Adrenal gland (tissue), 19 donors: ENCODE measurements at regions of chr6 and their contacts with region 1.

Region 1: DNA sequence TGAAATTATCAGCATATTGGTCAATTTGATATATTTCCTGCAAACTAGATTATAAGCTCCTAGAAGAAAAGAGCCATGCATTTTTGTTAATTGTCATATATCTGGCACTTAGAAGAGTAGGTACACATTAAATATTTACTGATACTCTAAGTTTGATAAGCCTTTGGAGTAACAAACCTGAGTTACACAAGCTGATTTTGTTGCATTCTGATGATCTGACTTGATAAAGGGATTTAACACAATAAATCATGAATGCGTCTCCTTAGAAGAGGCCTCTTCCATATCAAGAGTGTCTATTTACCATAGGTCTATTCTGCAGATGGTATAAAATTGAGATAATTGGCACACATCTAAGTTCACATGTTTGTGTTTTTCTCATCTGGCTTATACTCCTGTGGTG is 48.6 kb upstream of the SERINC1 start:
- DNase-seq: no peak
- H3K4me3 ChIP-seq: no peak overlapping the region
- H3K27ac ChIP-seq: no peak overlapping the region
- H3K4me1 ChIP-seq: no peaks in the 10 kb centered on the region
- H3K27me3 ChIP-seq: no peaks in the 10 kb centered on the region
- CTCF ChIP-seq: no peak
- POLR2A ChIP-seq: no peak

Region 2: DNA sequence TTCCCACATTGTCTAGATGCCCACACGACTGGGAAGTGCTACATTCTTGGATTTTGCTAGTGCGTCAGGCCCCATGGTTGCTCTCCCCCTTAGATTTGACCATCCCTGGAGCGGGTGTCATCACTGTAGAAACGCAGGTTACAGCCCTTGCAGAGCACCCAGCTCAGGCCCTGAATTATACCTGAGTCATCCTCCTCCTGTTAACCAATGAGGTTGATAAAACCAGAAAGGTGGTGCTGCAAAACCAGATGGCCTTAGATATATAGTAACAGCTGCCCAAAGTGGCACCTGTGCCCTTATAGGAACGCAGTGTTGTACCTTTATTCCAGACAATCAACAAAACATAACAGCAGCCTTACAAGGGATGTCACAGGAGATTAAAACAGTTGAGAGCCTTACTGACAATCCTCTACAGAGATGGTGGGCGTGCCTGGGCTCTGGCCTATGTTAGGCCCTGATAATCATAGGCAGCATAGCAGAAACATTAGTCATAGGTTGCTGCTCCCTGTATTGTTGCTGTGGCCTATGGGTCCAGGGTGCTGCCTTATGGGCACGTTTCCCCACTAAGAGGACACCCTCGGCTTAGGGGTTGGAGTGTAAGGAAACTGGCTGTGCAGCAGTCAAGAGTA is 154.3 kb before region 1 on chr6:
- intact Hi-C with region 1: loop called in 1 of 2 experiments (anchors 10 kb)
- DNase-seq: no peak
- H3K4me3 ChIP-seq: no peak overlapping the region
- H3K27ac ChIP-seq: no peak overlapping the region
- H3K4me1 ChIP-seq: no peaks in the 10 kb centered on the region
- H3K27me3 ChIP-seq: no peaks in the 10 kb centered on the region
- CTCF ChIP-seq: no peak
- POLR2A ChIP-seq: no peak

Region 3: GRCh38 chr6:122471107-122472021 is 48.8 kb before region 1 on chr6 and contains the start of gene SERINC1:
- intact Hi-C with region 1: loop called in 1 of 2 experiments (anchors 10 kb)
- DNase-seq: peak; percentile 94 to 99 (median 96)
- H3K4me3 ChIP-seq: peak within 1 kb of the TSS; percentile 64 to 90 (median 69)
- H3K27ac ChIP-seq: peak within 1 kb of the TSS; percentile 82 to 98 (median 93)
- H3K4me1 ChIP-seq: peaks cover 0 to 28% of the 10 kb centered on the region in 2 donors
- H3K27me3 ChIP-seq: no peaks in the 10 kb centered on the region
- CTCF ChIP-seq: no peak
- POLR2A ChIP-seq: peak; percentile 82 to 96
- total RNA-seq, gene SERINC1: 226 to 342 (median 266) TPM

Region 4: DNA sequence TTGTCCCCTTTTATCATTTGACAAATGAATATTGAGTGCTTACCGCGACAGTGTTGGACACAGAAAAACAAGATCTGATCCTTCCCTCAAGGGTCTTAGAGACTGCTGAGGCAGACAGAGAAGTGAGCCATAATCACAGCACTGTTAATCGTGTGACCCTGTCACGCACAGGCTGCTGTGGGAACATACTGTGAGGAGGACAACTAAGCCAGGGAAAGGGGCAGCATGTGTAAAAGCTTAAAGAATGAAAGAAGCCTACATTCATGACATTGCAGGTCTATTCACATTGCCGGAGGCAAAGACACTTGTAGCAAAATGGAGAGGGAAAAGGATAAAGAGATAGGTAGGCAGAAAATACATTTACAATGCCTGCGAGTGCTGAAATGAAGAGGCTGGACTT is 1083.9 kb after region 1 on chr6:
- intact Hi-C with region 1: no loop called
- DNase-seq: no peak
- H3K4me3 ChIP-seq: no peak overlapping the region
- H3K27ac ChIP-seq: no peak overlapping the region
- H3K4me1 ChIP-seq: no peaks in the 10 kb centered on the region
- H3K27me3 ChIP-seq: no peaks in the 10 kb centered on the region
- CTCF ChIP-seq: no peak
- POLR2A ChIP-seq: no peak